Transverse colon (tissue), 4 donors: ENCODE measurements at regions of chr10 and their contacts with region 1.

Region 1: GRCh38 chr10:122939856-122940543 is 14.0 kb downstream of the C10orf88 start:
- DNase-seq: no peak
- H3K4me3 ChIP-seq: no peak overlapping the region
- H3K27ac ChIP-seq: no peak overlapping the region
- H3K4me1 ChIP-seq: no peaks in the 10 kb centered on the region
- H3K27me3 ChIP-seq: no peaks in the 10 kb centered on the region
- CTCF ChIP-seq: no peak
- EP300 ChIP-seq: no peak
- POLR2A ChIP-seq: no peak

Region 2: GRCh38 chr10:122674781-122675180 is 265.2 kb before region 1 on chr10:
- in situ Hi-C with region 1: no loop called
- intact Hi-C with region 1: no loop called
- DNase-seq: no peak
- H3K4me3 ChIP-seq: no peak overlapping the region
- H3K27ac ChIP-seq: no peak overlapping the region
- H3K4me1 ChIP-seq: no peaks in the 10 kb centered on the region
- H3K27me3 ChIP-seq: peaks cover 9% of the 10 kb centered on the region
- CTCF ChIP-seq: no peak
- EP300 ChIP-seq: no peak
- POLR2A ChIP-seq: no peak

Region 3: GRCh38 chr10:122879339-122880273 is 60.4 kb before region 1 on chr10 and contains the start of gene FAM24B:
- in situ Hi-C with region 1: no loop called
- intact Hi-C with region 1: loop called (anchors 10 kb)
- DNase-seq: peak; percentile 95
- H3K4me3 ChIP-seq: peak within 1 kb of the TSS; percentile 40 to 70 (median 48)
- H3K27ac ChIP-seq: peak within 1 kb of the TSS; percentile 65 to 77 (median 72)
- H3K4me1 ChIP-seq: peaks cover 4 to 18% (median 11%) of the 10 kb centered on the region in 4 donors
- H3K27me3 ChIP-seq: no peaks in the 10 kb centered on the region
- CTCF ChIP-seq: no peak
- EP300 ChIP-seq: no peak
- POLR2A ChIP-seq: peak; percentile 45
- total RNA-seq, gene FAM24B: 3.7 to 7.1 (median 4.9) TPM in 3 of 4 donors, not detected in the other

Region 4: DNA sequence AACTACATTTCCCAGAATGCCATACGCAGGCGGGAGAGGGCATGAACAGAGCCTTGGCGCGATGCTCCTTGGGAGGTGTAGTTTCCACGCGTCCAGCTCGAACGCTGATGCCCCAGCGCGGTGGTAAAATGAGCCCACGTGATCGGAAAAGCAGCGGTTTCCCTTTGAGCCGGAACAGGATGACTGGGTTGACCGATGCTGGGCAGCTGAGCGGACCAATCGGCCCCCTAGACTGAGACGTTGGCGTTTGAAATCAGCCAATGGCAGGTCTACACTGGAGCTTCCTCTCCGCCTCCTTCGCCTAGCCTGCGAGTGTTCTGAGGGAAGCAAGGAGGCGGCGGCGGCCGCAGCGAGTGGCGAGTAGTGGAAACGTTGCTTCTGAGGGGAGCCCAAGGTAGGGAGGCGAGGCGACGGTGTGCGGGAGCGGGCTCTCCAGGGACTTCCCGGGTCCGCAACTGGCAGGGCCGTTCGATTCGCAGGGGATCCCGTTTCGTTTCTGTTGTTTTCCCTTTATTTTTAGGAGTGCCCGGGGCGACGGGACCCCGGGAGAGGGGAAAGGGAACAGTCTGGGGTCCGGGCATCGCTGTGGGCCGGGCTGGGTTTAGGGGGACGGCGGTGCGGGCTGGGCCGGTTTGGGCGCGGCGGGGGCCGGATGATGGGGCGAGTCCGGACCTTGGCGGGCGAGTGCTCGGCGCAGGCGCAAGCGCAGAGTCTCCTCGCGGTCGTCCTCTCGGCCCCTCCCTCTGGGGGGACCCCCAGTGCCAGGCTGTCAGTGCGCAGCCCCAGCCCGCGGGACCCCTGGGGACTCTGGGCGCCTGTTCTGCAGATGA is 214.3 kb after region 1 on chr10 and contains the start of gene BUB3:
- in situ Hi-C with region 1: no loop called
- intact Hi-C with region 1: no loop called
- DNase-seq: peak; percentile 98
- H3K4me3 ChIP-seq: peak within 1 kb of the TSS; percentile 78 to 100 (median 91)
- H3K27ac ChIP-seq: peak within 1 kb of the TSS; percentile 91 to 97 (median 95)
- H3K4me1 ChIP-seq: peaks cover 20 to 59% (median 33%) of the 10 kb centered on the region in 4 donors
- H3K27me3 ChIP-seq: peaks cover 42% of the 10 kb centered on the region
- CTCF ChIP-seq: peak in 4 of 5 experiments; percentile 19 to 58 (median 33)
- EP300 ChIP-seq: no peak
- POLR2A ChIP-seq: peak; percentile 85
- total RNA-seq, gene BUB3: 22.1 to 91.1 (median 54.9) TPM